ENCODE measurements at regions of chr12 and their contacts with region 1.

Region 1: DNA sequence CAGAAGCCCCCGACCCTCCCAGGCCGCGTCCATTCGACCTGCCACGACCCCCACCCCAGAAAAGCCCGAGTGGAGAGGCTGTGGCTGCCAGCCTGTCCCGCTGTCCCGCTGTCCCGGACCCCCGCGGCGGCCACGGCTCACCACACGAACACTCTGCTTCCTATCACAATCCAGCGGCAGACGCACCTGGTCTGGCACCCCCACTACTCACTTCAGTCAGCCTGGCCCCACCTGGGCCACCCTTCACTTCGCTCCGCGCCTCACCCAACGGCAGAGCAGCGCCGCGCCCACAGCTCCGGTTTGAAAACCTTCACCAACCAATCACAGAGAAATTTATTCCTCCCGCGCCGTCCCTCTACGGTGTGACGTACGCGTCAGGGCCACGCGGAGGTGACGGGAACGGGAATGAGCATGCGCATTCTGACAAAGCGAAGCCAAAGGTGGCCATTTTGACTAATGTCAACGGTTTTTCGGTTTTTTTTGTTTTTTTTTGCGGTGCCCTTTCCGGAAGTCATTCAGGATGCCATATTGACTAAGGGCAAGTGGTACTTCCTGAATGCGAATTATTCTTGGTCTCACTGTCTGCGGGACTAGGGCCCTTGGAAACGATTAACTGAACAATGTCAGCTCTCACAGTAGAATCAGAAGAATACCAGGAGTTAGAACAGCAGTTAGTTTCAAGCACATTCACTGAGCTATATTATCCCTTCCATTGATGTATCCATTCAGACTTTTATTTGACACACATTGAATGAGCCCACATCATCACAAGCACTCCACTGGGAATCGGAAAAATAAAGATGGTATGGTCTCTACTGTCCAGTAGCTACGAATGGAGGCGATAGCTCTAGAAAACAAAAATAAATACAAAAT is at the start of gene RACGAP1:
- DNase-seq: peak; percentile 98
- ATAC-seq: peak; percentile 98
- H3K4me3 ChIP-seq: peak within 1 kb of the TSS; percentile 96
- H3K27ac ChIP-seq: peak within 1 kb of the TSS; percentile 71
- H3K4me1 ChIP-seq: 0 out of 2 replicates have a peak, but pooled peaks cover 3% of the 10 kb centered on the region
- H3K27me3 ChIP-seq: no peaks in the 10 kb centered on the region
- CTCF ChIP-seq: no peak
- EP300 ChIP-seq: no peak
- POLR2A ChIP-seq: peak; percentile 89
- RAD21 ChIP-seq: no peak
- polyA plus RNA-seq, gene RACGAP1: 32.4 to 40.7 TPM

Region 2: DNA sequence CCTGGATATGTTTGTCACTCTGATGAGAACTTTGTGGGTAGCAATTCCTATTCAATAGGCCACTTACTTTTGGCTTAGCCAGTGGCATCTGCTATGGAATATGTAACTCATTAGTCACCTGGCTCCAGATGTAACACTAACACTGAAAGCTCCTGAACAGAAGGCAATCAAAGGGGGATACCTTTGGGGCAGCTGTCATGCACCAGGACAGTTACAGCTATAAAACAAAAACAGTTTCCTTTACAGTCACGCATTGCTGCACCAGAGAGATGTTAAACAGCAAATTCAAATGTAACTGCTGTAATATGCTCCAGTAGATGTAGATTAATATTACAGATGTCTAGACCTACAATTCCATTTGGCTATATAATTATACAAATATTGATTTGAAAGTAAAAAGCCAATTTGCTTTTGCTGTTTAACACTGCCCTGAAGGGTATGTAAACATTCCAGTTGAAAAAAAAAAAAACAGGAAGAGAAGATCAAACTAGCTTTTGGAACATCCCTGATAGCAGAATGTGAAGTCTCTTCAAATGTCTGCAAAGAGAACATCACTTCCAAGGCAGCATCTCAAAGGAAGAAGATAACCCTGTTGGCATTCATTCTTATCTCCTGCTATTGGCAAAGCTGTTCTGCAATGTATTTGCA is 18.5 kb before region 1 on chr12:
- CTCF ChIA-PET with region 1: interaction called, 4 read pairs
- POLR2A ChIA-PET with region 1: interaction called, 10 read pairs
- RAD21 ChIA-PET with region 1: no interaction called
- SMC1A ChIA-PET with region 1: interaction called, 4 read pairs
- in situ Hi-C with region 1: no loop called
- intact Hi-C with region 1: no loop called
- DNase-seq: no peak
- ATAC-seq: no peak
- H3K4me3 ChIP-seq: no peak overlapping the region
- H3K27ac ChIP-seq: no peak overlapping the region
- H3K4me1 ChIP-seq: peaks cover 10% of the 10 kb centered on the region; the same call in 1 of the 2 replicates
- H3K27me3 ChIP-seq: no peaks in the 10 kb centered on the region
- CTCF ChIP-seq: no peak
- EP300 ChIP-seq: no peak
- POLR2A ChIP-seq: no peak
- RAD21 ChIP-seq: no peak

Region 3: GRCh38 chr12:50043854-50044253 is 18.4 kb after region 1 on chr12:
- CTCF ChIA-PET with region 1: interaction called, 114 read pairs
- POLR2A ChIA-PET with region 1: no interaction called
- RAD21 ChIA-PET with region 1: no interaction called
- SMC1A ChIA-PET with region 1: interaction called, 7 read pairs
- in situ Hi-C with region 1: no loop called
- intact Hi-C with region 1: no loop called
- DNase-seq: no peak
- ATAC-seq: no peak
- H3K4me3 ChIP-seq: no peak overlapping the region
- H3K27ac ChIP-seq: no peak overlapping the region
- H3K4me1 ChIP-seq: no peaks in the 10 kb centered on the region
- H3K27me3 ChIP-seq: no peaks in the 10 kb centered on the region
- CTCF ChIP-seq: no peak
- EP300 ChIP-seq: no peak
- POLR2A ChIP-seq: no peak
- RAD21 ChIP-seq: no peak

Region 4: GRCh38 chr12:50353869-50354593 is 328.6 kb after region 1 on chr12:
- CTCF ChIA-PET with region 1: no interaction called
- POLR2A ChIA-PET with region 1: no interaction called
- RAD21 ChIA-PET with region 1: no interaction called
- SMC1A ChIA-PET with region 1: no interaction called
- in situ Hi-C with region 1: no loop called
- intact Hi-C with region 1: no loop called
- DNase-seq: no peak
- ATAC-seq: no peak
- H3K4me3 ChIP-seq: no peak overlapping the region
- H3K27ac ChIP-seq: no peak overlapping the region
- H3K4me1 ChIP-seq: no peaks in the 10 kb centered on the region
- H3K27me3 ChIP-seq: no peaks in the 10 kb centered on the region
- CTCF ChIP-seq: no peak
- EP300 ChIP-seq: no peak
- POLR2A ChIP-seq: no peak
- RAD21 ChIP-seq: no peak

Measured in GM12878 (cell line).